ENCODE measurements at regions of chr2 and their contacts with region 1.

Region 1: GRCh38 chr2:190319555-190320498 is at the start of gene HIBCH:
- DNase-seq: peak; percentile 82
- ATAC-seq: peak; percentile 94
- H3K4me3 Mint-ChIP-seq: peak within 1 kb of the TSS; percentile 96
- H3K27ac Mint-ChIP-seq: peak within 1 kb of the TSS; percentile 94
- H3K4me1 Mint-ChIP-seq: peaks cover 46% of the 10 kb centered on the region
- H3K27me3 Mint-ChIP-seq: peaks cover 2% of the 10 kb centered on the region
- CTCF ChIP-seq: no peak
- total RNA-seq, gene HIBCH: 16.3 and 21.2 TPM in 2 replicates

Region 2: GRCh38 chr2:189440947-189441708 is 878.7 kb before region 1 on chr2 and contains the start of gene WDR75:
- CTCF ChIA-PET with region 1: no interaction called
- POLR2A ChIA-PET with region 1: no interaction called
- intact Hi-C with region 1: loop called (anchors 2 kb)
- DNase-seq: peak; percentile 79
- ATAC-seq: peak; percentile 94
- H3K4me3 Mint-ChIP-seq: peak within 1 kb of the TSS; percentile 98
- H3K27ac Mint-ChIP-seq: peak within 1 kb of the TSS; percentile 99
- H3K4me1 Mint-ChIP-seq: peaks cover 26% of the 10 kb centered on the region
- H3K27me3 Mint-ChIP-seq: no peaks in the 10 kb centered on the region
- CTCF ChIP-seq: no peak
- total RNA-seq, gene WDR75: 53.0 and 61.2 TPM in 2 replicates

Region 3: DNA sequence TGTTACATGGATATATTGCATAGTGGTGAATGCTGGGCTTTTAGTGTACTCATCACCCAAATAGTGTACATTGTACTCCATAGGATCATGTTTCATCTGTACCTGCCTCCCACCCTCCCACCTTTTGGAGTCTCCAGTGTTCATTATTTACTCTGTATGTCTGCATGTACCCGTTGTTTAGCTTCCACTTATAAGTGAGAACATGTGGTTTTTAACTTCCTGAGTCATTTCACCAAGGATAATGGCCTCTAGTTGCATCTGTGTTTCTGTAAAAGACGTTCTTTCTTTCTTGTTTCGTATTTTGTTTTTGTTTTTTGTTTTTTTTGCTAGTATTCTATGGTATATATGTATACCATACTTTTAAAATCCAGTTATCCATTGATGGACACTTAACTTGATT is 364.8 kb before region 1 on chr2:
- CTCF ChIA-PET with region 1: no interaction called
- POLR2A ChIA-PET with region 1: no interaction called
- intact Hi-C with region 1: no loop called
- DNase-seq: no peak
- ATAC-seq: no peak
- H3K4me3 Mint-ChIP-seq: peak overlapping the region; percentile 24
- H3K27ac Mint-ChIP-seq: no peak overlapping the region
- H3K4me1 Mint-ChIP-seq: peaks cover 33% of the 10 kb centered on the region
- H3K27me3 Mint-ChIP-seq: no peaks in the 10 kb centered on the region
- CTCF ChIP-seq: no peak

Region 4: GRCh38 chr2:190180313-190181122 is 139.3 kb before region 1 on chr2:
- CTCF ChIA-PET with region 1: interaction called, 3 read pairs
- POLR2A ChIA-PET with region 1: no interaction called
- intact Hi-C with region 1: loop called (anchors 1 kb)
- DNase-seq: peak; percentile 54
- ATAC-seq: peak; percentile 86
- H3K4me3 Mint-ChIP-seq: peak overlapping the region; percentile 82
- H3K27ac Mint-ChIP-seq: no peak overlapping the region
- H3K4me1 Mint-ChIP-seq: peaks cover 20% of the 10 kb centered on the region
- H3K27me3 Mint-ChIP-seq: no peaks in the 10 kb centered on the region
- CTCF ChIP-seq: no peak

Region 5: GRCh38 chr2:190343500-190344275 is 23.9 kb after region 1 on chr2 and contains the start of gene INPP1:
- CTCF ChIA-PET with region 1: no interaction called
- POLR2A ChIA-PET with region 1: interaction called, 6 read pairs
- intact Hi-C with region 1: loop called (anchors 2 kb)
- DNase-seq: peak; percentile 45
- ATAC-seq: peak; percentile 66
- H3K4me3 Mint-ChIP-seq: peak within 1 kb of the TSS; percentile 87
- H3K27ac Mint-ChIP-seq: peak within 1 kb of the TSS; percentile 47
- H3K4me1 Mint-ChIP-seq: peaks cover 9% of the 10 kb centered on the region
- H3K27me3 Mint-ChIP-seq: no peaks in the 10 kb centered on the region
- CTCF ChIP-seq: no peak
- total RNA-seq, gene INPP1: 4.2 and 4.8 TPM in 2 replicates

Region 6: GRCh38 chr2:190376591-190377245 is 56.9 kb after region 1 on chr2:
- CTCF ChIA-PET with region 1: no interaction called
- POLR2A ChIA-PET with region 1: interaction called, 10 read pairs
- intact Hi-C with region 1: loop called (anchors 2 kb)
- DNase-seq: no peak
- ATAC-seq: no peak
- H3K4me3 Mint-ChIP-seq: no peak overlapping the region
- H3K27ac Mint-ChIP-seq: no peak overlapping the region
- H3K4me1 Mint-ChIP-seq: peaks cover 3% of the 10 kb centered on the region
- H3K27me3 Mint-ChIP-seq: no peaks in the 10 kb centered on the region
- CTCF ChIP-seq: no peak

Region 7: GRCh38 chr2:190408538-190409271 is 88.9 kb after region 1 on chr2:
- CTCF ChIA-PET with region 1: no interaction called
- POLR2A ChIA-PET with region 1: no interaction called
- intact Hi-C with region 1: loop called (anchors 2 kb)
- DNase-seq: no peak
- ATAC-seq: peak; percentile 55
- H3K4me3 Mint-ChIP-seq: peak overlapping the region; percentile 84
- H3K27ac Mint-ChIP-seq: peak overlapping the region; percentile 86
- H3K4me1 Mint-ChIP-seq: peaks cover 26% of the 10 kb centered on the region
- H3K27me3 Mint-ChIP-seq: no peaks in the 10 kb centered on the region
- CTCF ChIP-seq: no peak